ENCODE measurements at regions of chr1 and their contacts with region 1.

Region 1: GRCh38 chr1:36516372-36517325 is 33.9 kb upstream of the CSF3R start:
- DNase-seq: peak; percentile 52
- H3K4me3 Mint-ChIP-seq: no peak overlapping the region
- H3K27ac Mint-ChIP-seq: no peak overlapping the region
- H3K4me1 Mint-ChIP-seq: no peaks in the 10 kb centered on the region
- H3K27me3 Mint-ChIP-seq: no peaks in the 10 kb centered on the region

Region 2: GRCh38 chr1:36506276-36506920 is 10.3 kb before region 1 on chr1:
- CTCF ChIA-PET with region 1: interaction called, 16 read pairs
- intact Hi-C with region 1: no loop called
- DNase-seq: no peak
- H3K4me3 Mint-ChIP-seq: no peak overlapping the region
- H3K27ac Mint-ChIP-seq: no peak overlapping the region
- H3K4me1 Mint-ChIP-seq: no peaks in the 10 kb centered on the region
- H3K27me3 Mint-ChIP-seq: peaks cover 2% of the 10 kb centered on the region

Region 3: GRCh38 chr1:36530791-36531190 is 14.1 kb after region 1 on chr1:
- CTCF ChIA-PET with region 1: interaction called, 10 read pairs
- intact Hi-C with region 1: no loop called
- DNase-seq: no peak
- H3K4me3 Mint-ChIP-seq: no peak overlapping the region
- H3K27ac Mint-ChIP-seq: no peak overlapping the region
- H3K4me1 Mint-ChIP-seq: no peaks in the 10 kb centered on the region
- H3K27me3 Mint-ChIP-seq: peaks cover 2% of the 10 kb centered on the region

Region 4: DNA sequence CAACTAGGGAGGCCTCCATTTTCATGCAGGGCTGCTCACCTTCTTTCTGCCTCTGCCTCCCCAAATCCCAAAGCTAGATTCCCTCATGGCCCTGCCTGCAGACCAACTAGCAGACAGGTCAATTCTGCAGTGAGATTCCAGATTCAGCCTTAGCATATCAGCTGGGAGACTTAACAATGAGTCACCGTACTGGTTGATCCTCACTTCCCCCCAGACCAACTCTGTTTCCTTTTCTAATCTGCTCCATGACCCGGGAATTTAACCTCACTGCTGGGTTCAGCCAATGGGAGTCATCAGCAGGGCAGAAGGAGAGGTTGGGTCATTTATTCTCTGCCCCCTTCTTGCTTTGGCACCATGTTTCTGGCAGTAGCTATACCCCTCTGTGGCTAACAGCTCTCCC is 658.2 kb after region 1 on chr1:
- CTCF ChIA-PET with region 1: no interaction called
- intact Hi-C with region 1: no loop called
- DNase-seq: no peak
- H3K4me3 Mint-ChIP-seq: no peak overlapping the region
- H3K27ac Mint-ChIP-seq: no peak overlapping the region
- H3K4me1 Mint-ChIP-seq: no peaks in the 10 kb centered on the region
- H3K27me3 Mint-ChIP-seq: peaks cover 18% of the 10 kb centered on the region

Measured in activated naive CD4-positive, alpha-beta T cell treated with anti-CD3 and anti-CD28 coated beads for 36 hours (primary cell).